Activated T-helper 1 cell treated with anti-CD3 and anti-CD28 coated beads, Interleukin-12 subunit alpha, Interleukin-12 subunit beta, Interleukin-2, Interleukin-4 antibody, amounts not matched to agents 30 ng/mL and 10 ng/mL and 1 ng/mL, durations not matched to agents 14 hours and 24 hours and 36 hours (primary cell): ENCODE measurements at regions of chr1 and their contacts with region 1.

Region 1: DNA sequence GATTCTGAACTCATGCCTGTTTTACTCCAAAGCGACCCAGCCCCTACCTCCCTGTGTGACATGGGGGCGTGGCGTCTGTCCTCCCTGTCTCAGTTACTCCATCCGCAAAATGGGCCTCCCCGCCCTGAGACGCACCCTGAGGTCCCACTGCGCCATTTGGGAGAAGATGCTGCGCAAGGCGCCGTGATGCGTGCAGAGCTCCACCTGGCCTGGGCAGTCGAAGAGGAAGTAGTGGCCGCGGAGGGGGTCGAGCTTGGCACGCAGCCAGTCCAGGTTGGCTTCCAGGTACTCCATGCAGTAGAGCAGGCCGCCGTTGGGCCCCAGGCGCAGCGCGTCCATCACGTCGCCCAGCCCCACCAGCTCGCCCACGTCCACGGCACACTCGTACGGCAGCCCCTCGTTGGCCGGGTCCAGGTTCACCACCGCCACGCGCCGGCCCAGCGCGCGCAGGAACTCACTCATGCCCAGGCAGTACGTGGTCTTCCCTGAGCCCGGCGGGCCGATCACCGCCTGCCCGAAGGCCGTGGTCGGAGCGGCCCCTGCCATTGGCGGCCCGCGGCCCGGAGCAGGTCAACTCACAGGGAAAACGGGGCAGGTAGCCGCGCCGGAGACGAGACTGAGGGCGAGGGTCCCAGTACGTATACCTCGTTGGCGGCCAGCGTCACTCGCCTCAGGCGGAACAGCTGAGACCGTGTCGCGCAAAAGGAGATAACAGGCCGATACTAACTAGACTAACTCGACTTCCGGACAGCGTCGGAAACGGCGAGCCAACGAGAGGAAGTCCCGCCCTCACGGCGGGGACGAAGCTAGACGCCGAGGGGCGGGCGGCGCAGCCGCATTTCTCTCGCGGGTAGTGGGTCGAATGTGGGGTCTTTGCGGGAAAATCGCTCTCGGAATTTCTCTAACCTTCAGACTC is at the start of gene GPN2:
- DNase-seq: peak; percentile 80
- H3K4me3 Mint-ChIP-seq: peak within 1 kb of the TSS; percentile 99
- H3K27ac Mint-ChIP-seq: peak within 1 kb of the TSS; percentile 95
- H3K4me1 Mint-ChIP-seq: peaks cover 26% of the 10 kb centered on the region
- H3K27me3 Mint-ChIP-seq: no peaks in the 10 kb centered on the region
- total RNA-seq, gene GPN2: 46.4 and 51.9 TPM in 2 replicates

Region 2: GRCh38 chr1:26900001-26900814 is 10.4 kb after region 1 on chr1 and contains the start of gene GPATCH3:
- intact Hi-C with region 1: loop called (anchors 1 kb)
- DNase-seq: peak; percentile 81
- H3K4me3 Mint-ChIP-seq: peak within 1 kb of the TSS; percentile 93
- H3K27ac Mint-ChIP-seq: peak within 1 kb of the TSS; percentile 96
- H3K4me1 Mint-ChIP-seq: peaks cover 27% of the 10 kb centered on the region
- H3K27me3 Mint-ChIP-seq: peaks cover 2% of the 10 kb centered on the region
- total RNA-seq, gene GPATCH3: 15.6 and 15.7 TPM in 2 replicates

Region 3: DNA sequence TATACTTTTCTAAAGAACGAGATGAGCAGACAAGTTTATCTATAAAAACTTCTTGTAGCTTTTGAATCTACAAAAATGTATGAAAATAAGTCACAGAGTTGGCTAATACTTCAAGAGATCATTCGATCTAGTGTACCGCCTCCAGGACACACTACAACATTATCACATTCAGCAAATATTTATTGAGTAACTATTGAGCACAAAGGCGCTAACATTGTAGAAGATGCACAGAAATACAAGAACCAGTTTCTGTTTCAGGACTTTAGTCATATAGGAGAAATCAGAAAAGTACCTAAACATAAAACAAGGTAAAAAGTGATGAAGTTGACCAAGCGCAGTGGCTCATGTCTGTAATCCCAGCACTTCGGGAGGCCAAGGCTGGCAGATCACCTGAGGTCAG is 579.5 kb after region 1 on chr1:
- intact Hi-C with region 1: no loop called
- DNase-seq: no peak
- H3K4me3 Mint-ChIP-seq: no peak overlapping the region
- H3K27ac Mint-ChIP-seq: no peak overlapping the region
- H3K4me1 Mint-ChIP-seq: peaks cover 50% of the 10 kb centered on the region
- H3K27me3 Mint-ChIP-seq: no peaks in the 10 kb centered on the region